Heart right ventricle (tissue), 16 donors: ENCODE measurements at regions of chr2 and their contacts with region 1.

Region 1: GRCh38 chr2:167181134-167181533 is 292.9 kb downstream of the XIRP2 start:
- DNase-seq: no peak
- ATAC-seq: no peak
- H3K4me3 ChIP-seq: no peak overlapping the region
- H3K27ac ChIP-seq: no peak overlapping the region
- H3K4me1 ChIP-seq: peaks cover 0 to 9% (median 0%) of the 10 kb centered on the region in 9 donors
- H3K27me3 ChIP-seq: no peaks in the 10 kb centered on the region
- CTCF ChIP-seq: no peak

Region 2: GRCh38 chr2:167147271-167147941 is 33.7 kb before region 1 on chr2:
- intact Hi-C with region 1: loop called in 4 of 10 experiments (anchors 5 kb)
- DNase-seq: no peak
- ATAC-seq: no peak
- H3K4me3 ChIP-seq: no peak overlapping the region
- H3K27ac ChIP-seq: no peak overlapping the region
- H3K4me1 ChIP-seq: peaks cover 0 to 10% (median 0%) of the 10 kb centered on the region in 9 donors
- H3K27me3 ChIP-seq: no peaks in the 10 kb centered on the region
- CTCF ChIP-seq: no peak

Region 3: DNA sequence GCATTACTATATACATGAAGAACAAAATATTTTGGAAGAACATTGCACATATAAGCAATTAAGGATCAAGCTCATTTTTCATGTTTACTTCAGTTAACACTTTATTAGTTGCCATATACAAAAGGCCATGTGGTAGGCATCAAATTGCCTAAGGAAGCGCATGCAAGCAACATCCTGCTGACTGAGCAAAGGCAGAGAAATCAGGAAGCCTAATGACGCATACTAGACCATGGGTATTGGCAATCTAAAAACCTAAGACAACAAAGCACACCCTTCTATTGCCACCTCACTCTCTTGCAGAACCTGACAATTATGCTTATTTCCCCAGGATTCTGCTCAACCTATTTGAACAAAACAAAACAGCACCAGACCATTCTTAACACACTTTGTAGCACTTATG is 894.3 kb after region 1 on chr2:
- intact Hi-C with region 1: no loop called
- DNase-seq: no peak
- ATAC-seq: no peak
- H3K4me3 ChIP-seq: no peak overlapping the region
- H3K27ac ChIP-seq: no peak overlapping the region
- H3K4me1 ChIP-seq: peaks cover 0 to 8% (median 0%) of the 10 kb centered on the region in 9 donors
- H3K27me3 ChIP-seq: no peaks in the 10 kb centered on the region
- CTCF ChIP-seq: no peak